ENCODE measurements at regions of chr12 and their contacts with region 1.

Region 1: GRCh38 chr12:26651566-26652188 is 181.3 kb downstream of the ITPR2 start:
- DNase-seq: peak in 4 of 10 donors; percentile 8 to 58 (median 53)
- H3K4me3 ChIP-seq: no peak overlapping the region
- H3K27ac ChIP-seq: peak overlapping the region in 6 of 59 donors; percentile 5 to 60 (median 43)
- H3K27me3 ChIP-seq: no peaks in the 10 kb centered on the region
- CTCF ChIP-seq: peak; percentile 66 to 97 (median 87)

Region 2: DNA sequence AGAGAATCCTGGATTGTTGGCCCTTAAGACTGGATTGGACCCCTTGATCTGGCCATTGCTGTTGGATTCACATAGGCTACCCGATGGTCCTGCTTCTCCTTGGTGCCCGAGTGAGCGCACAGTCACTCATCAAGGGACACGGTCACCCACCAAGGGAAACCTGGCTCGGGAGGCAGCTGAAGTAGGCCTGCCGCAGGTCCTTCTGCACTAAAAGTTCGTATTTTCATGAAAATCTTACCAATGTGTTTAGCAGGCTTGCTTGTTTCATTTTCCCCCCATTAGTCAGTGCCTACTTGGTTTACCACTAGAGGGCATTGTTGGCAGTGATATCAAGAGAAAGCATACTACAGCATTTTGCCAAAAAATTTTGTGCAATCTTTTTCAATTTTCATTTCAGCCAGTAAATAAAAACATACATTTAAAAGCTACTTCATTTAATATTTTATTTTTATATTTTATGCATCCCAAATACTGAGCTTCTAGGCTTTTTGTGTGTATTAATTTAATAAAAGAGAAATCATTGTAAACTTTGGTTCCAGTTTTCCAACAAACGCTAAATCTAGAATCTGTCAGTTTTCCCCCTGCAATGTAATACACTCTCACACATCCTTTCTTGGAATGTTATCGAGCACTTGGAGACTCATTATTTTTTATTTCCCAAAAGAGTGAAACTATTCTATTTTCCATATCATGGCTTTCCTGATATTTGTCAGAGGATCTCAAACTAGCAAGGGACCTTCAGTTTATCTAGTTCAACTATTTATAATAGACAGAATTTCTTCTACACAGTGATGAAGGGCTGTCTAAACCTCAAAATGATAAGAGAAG is 1215.3 kb before region 1 on chr12:
- intact Hi-C with region 1: loop called in 1 of 2 experiments (anchors 10 kb)
- DNase-seq: peak in 4 of 10 donors; percentile 3 to 53 (median 32)
- H3K4me3 ChIP-seq: peak overlapping the region in 58 of 59 donors; percentile 15 to 68 (median 51)
- H3K27ac ChIP-seq: peak overlapping the region in 22 of 59 donors; percentile 11 to 79 (median 40)
- H3K27me3 ChIP-seq: no peaks in the 10 kb centered on the region
- CTCF ChIP-seq: peak; percentile 74 to 94 (median 86)

Region 3: DNA sequence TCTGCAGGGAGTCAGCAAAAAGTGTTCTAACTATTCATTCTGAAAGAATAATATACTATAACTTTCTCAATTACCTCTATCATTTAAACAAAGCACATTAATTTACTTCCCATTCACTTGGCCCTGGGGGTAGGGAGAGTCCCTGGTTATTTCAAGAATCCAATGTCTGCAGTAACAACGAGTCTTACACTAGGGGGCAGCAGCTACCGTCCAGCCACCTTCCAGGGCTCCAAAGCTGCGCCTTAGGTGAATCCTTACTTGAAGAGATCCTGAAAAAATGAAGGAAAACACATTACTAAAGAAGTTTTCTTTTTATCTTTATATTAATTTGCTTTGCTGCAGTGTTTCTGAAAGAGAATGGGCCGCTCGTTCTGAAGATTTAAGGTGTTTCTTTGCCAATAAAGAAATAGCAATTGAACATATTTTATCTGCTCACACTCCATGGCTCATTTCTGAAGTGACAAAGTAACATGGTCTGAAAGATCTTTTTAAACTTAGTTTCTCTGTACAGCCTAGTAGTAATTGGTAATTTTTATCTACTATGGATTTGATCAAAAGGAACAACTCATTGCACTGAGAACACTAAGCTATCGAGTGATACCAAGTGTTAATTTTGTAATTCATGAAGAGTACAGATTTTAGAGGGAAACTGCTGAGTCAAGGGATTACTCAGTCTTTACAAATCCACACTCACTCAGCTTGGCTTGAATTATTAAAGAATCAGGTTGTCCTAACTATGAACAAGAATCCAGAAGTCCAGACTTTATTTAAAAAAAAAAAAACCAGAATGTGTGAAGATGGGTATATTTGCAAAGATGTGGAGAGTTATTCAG is 554.4 kb before region 1 on chr12:
- intact Hi-C with region 1: loop called in 1 of 2 experiments (anchors 5 kb)
- DNase-seq: peak; percentile 51 to 81 (median 70)
- H3K4me3 ChIP-seq: peak overlapping the region in 3 of 59 donors; percentile 2 to 20 (median 11)
- H3K27ac ChIP-seq: peak overlapping the region in 10 of 59 donors; percentile 7 to 65 (median 30)
- H3K27me3 ChIP-seq: no peaks in the 10 kb centered on the region
- CTCF ChIP-seq: peak; percentile 79 to 99 (median 93)

Region 4: GRCh38 chr12:26378711-26379110 is 273.0 kb before region 1 on chr12:
- intact Hi-C with region 1: loop called in 1 of 2 experiments (anchors 10 kb)
- DNase-seq: peak in 1 of 10 donors; percentile 38
- H3K4me3 ChIP-seq: peak overlapping the region in 2 of 59 donors; percentile 2 to 11
- H3K27ac ChIP-seq: peak overlapping the region in 27 of 59 donors; percentile 2 to 57 (median 36)
- H3K27me3 ChIP-seq: no peaks in the 10 kb centered on the region
- CTCF ChIP-seq: no peak

Region 5: DNA sequence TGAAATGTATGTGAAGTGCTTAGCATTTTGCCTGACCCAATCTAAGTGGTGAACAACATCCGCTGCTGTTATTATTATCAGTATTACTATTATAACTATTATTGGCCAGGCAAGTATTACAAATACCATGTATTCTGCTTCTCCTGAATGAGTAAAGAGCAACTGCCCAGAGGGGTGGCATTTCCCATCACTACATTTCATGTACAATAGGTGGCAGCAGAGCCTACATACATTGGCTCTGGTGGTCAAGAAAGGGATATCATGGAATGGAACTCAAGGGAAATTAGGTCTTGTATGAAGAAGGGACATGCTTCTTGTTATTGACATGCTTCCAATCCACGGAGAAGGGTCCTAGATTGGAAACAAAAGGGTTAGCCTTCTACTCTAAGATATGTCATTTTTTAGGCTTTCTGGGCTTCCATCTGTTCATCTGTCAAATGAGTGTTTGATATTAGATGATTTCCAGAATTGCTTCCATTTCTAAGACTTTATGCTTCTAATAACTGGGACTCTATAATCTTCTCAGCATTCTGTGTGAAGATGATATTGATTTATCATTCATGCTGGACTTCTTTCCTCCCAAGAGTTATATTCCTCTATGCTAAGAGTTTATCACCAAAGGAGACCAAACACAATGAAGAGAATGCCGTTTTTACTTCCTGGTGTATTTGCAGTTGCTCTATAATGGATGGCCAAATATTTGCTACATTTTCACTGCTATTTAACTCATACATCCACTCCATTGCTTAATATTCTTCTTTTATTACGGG is 217.2 kb before region 1 on chr12:
- intact Hi-C with region 1: loop called in 1 of 2 experiments (anchors 10 kb)
- DNase-seq: peak in 2 of 10 donors; percentile 11 to 26
- H3K4me3 ChIP-seq: no peak overlapping the region
- H3K27ac ChIP-seq: peak overlapping the region in 1 of 59 donors; percentile 3
- H3K27me3 ChIP-seq: no peaks in the 10 kb centered on the region
- CTCF ChIP-seq: peak; percentile 25 to 86 (median 65)

Region 6: GRCh38 chr12:26576266-26576665 is 75.4 kb before region 1 on chr12:
- intact Hi-C with region 1: no loop called
- DNase-seq: no peak
- H3K4me3 ChIP-seq: no peak overlapping the region
- H3K27ac ChIP-seq: no peak overlapping the region
- H3K27me3 ChIP-seq: no peaks in the 10 kb centered on the region
- CTCF ChIP-seq: no peak

Region 7: DNA sequence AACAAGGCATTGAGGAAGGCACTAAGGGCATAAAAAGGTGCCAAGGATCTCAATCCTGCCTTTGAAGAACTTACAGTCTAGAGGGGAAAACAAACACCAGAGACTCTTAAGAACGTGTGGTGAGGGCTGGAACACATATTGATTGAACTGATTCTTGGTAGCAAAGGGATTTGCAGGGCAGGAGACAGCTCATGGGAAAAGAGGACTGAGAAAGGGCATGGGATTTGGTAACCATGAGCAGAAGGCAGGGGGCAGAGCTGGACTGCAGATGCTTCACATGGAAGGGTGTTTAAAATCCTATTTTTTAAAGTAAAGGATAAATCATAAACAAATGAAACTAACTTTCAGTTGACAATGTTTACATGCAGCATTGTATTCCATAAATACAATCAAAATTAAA is 21.8 kb before region 1 on chr12:
- intact Hi-C with region 1: loop called in 1 of 2 experiments (anchors 1 kb)
- DNase-seq: peak in 3 of 10 donors; percentile 33 to 51 (median 41)
- H3K4me3 ChIP-seq: peak overlapping the region in 15 of 59 donors; percentile 3 to 49 (median 27)
- H3K27ac ChIP-seq: peak overlapping the region in 41 of 59 donors; percentile 2 to 80 (median 50)
- H3K27me3 ChIP-seq: no peaks in the 10 kb centered on the region
- CTCF ChIP-seq: peak in 55 of 56 donors; percentile 38 to 79 (median 61)

Region 8: DNA sequence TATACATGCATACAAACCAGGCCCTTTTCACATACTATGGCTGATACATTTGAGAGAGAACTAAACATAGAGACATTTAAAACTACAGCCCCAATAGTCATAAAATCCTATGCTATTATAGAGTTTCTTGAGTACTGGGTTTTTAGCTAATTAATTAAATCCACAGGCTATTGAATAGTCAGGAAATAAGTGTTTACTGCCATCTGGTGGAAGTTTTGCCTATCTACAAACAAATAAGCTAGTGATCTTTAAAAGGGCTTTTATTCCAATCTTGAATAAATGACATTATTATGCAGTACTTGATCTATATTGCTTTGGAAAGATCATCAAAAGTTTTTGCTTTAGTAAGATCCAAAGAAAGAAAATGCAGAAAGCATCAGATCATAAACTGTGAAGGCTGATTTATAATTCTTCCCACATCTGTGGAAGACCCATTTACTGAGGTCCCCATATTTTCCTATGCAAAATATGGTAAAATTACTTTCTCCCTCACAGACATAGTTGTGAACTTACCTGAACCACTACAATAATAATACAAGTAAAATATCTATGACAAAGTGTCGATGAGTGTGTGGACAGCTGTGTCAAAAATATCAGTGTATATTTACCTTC is 50.0 kb after region 1 on chr12:
- intact Hi-C with region 1: loop called in 1 of 2 experiments (anchors 10 kb)
- DNase-seq: no peak
- H3K4me3 ChIP-seq: no peak overlapping the region
- H3K27ac ChIP-seq: no peak overlapping the region
- H3K27me3 ChIP-seq: no peaks in the 10 kb centered on the region
- CTCF ChIP-seq: peak; percentile 58 to 91 (median 75)

Region 9: GRCh38 chr12:26748741-26749431 is 97.2 kb after region 1 on chr12:
- intact Hi-C with region 1: no loop called
- DNase-seq: no peak
- H3K4me3 ChIP-seq: no peak overlapping the region
- H3K27ac ChIP-seq: peak overlapping the region in 1 of 59 donors; percentile 22
- H3K27me3 ChIP-seq: no peaks in the 10 kb centered on the region
- CTCF ChIP-seq: no peak

Region 10: DNA sequence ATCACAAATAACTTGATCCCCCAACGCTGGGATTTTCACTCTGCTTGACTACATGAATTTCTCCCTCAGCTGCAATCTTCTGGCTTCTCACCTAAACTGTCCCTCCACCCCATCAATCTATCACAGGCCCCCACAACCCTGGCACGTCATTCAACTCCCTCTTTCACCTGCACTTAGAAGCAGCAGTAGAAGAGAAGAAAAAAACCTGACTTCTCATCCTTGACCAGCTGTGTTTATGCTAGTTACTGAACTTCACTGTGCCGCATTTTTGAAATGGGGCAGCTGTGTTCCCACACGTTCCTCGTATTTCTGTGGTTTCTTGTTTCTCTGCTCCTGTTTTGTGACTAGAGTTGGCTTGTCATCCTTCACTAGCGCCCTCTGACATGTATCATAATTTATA is 146.3 kb after region 1 on chr12:
- intact Hi-C with region 1: no loop called
- DNase-seq: no peak
- H3K4me3 ChIP-seq: no peak overlapping the region
- H3K27ac ChIP-seq: peak overlapping the region in 1 of 59 donors; percentile 27
- H3K27me3 ChIP-seq: no peaks in the 10 kb centered on the region
- CTCF ChIP-seq: no peak

Measured in dorsolateral prefrontal cortex (tissue), 120 donors.